Activated CD4-positive, alpha-beta memory T cell treated with anti-CD3 and anti-CD28 coated beads for 36 hours (primary cell): ENCODE measurements at regions of chr14 and their contacts with region 1.

Region 1: DNA sequence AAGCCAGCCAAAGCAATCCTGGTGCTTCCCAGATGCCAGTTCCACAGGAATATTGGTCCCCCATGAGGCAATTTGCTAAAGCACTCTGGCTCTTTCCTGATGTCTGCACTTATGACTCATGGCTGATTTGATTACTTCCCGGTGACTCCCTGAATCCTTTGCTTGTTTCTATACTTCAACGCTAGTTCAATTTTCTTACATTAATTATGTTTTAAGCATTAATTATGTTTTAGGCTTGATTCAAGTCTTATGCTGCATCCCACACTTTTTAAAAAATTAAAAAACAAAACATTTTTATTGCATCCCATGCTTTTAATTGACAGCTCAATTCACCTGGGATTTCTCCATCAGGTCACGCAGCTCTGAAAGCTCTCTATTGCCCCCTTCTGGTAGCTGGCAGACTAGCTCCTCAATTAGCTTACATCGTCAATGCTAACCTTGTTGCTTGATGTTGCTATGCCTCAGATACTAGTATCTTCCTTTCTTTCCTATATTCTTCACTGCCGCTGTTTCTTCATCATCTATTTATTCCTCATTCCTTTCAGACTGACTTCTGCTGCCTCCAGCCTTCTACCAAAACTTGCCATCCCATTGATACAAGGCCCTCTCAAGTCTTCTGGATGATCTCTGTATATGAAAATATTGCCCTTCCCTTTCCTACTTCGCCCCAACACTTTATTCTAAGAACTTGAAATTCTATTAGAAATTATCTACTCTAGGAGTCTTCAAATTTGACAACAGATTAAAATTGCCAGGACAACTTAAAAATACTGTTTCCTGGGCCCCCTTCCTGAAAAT is 32.0 kb downstream of the TSHR start:
- DNase-seq: peak; percentile 72
- H3K4me3 Mint-ChIP-seq: no peak overlapping the region
- H3K27ac Mint-ChIP-seq: no peak overlapping the region
- H3K4me1 Mint-ChIP-seq: no peaks in the 10 kb centered on the region
- H3K27me3 Mint-ChIP-seq: peaks cover 9% of the 10 kb centered on the region

Region 2: DNA sequence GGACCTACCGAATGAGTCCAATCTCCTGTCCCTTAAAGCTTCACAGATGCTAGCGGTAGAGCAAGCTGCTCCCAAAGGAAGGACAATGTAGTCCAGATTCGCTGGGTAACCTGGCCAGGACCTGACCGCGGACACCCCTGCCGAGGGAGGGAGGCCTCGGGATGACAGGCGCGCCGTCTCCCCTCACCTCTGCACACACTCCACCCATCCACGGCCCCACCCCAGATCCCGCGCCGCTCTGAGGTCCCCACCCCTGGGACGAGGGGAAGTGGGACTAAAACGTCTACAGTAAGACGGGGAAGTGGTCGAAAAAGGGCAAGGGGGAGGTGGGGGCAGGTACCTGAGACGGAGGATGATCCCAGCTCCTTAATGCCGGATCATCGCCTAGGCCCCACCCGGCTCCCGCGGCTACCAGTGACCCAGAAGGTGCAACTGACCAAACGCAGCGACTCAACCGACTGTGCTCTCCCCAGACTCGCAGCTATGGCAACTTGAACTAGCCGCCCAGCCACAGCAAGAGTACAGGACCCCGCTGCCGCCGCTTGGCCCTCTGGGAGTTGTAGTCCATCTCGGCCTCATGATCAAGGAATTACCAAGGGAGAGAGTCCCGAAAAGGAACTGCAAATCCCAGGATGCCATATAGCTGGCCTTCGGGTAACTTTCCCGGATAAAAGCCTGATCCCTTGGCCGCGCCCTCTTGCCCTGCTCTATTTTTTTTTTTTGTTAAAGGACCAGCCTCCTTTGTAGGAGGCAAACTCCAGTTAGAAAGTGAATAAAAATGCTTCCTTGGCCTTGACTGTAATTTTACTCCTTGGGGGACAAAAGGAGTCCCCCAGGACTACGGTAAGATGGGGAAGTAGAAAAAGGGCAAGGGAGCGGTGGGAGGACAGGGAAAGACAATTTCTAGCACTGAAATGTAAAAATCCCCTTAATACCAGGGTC is 45.9 kb before region 1 on chr14 and contains the start of gene CEP128:
- CTCF ChIA-PET with region 1: interaction called, 10 read pairs
- POLR2A ChIA-PET with region 1: no interaction called
- intact Hi-C with region 1: loop called (anchors 2 kb)
- DNase-seq: peak; percentile 92
- H3K4me3 Mint-ChIP-seq: peak within 1 kb of the TSS; percentile 88
- H3K27ac Mint-ChIP-seq: peak within 1 kb of the TSS; percentile 93
- H3K4me1 Mint-ChIP-seq: peaks cover 37% of the 10 kb centered on the region
- H3K27me3 Mint-ChIP-seq: no peaks in the 10 kb centered on the region
- total RNA-seq, gene CEP128: 19.4 to 22.8 TPM

Region 3: GRCh38 chr14:80973931-80974641 is 13.3 kb before region 1 on chr14:
- CTCF ChIA-PET with region 1: interaction called, 84 read pairs
- POLR2A ChIA-PET with region 1: interaction called, 3 read pairs
- intact Hi-C with region 1: no loop called
- DNase-seq: no peak
- H3K4me3 Mint-ChIP-seq: no peak overlapping the region
- H3K27ac Mint-ChIP-seq: no peak overlapping the region
- H3K4me1 Mint-ChIP-seq: peaks cover 20% of the 10 kb centered on the region
- H3K27me3 Mint-ChIP-seq: peaks cover 2% of the 10 kb centered on the region

Region 4: DNA sequence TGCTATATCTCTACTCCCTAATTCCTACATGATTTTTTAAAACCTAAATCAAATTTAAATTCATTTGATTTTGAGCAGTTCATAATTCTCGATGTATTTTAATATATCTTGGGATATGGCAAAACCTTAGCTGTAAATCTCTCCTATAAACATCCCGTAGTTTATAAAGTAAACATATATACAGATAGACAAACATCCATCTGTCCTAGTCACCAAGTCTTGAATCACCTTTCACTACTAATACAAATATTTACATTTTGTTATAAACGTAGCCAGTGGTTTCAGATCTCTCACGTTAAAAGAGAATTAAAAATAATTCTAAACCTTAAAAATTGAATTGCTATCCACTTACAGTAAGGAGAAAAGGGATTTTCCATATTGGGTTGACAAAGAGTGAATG is 74.9 kb after region 1 on chr14:
- CTCF ChIA-PET with region 1: no interaction called
- POLR2A ChIA-PET with region 1: no interaction called
- intact Hi-C with region 1: no loop called
- DNase-seq: no peak
- H3K4me3 Mint-ChIP-seq: no peak overlapping the region
- H3K27ac Mint-ChIP-seq: no peak overlapping the region
- H3K4me1 Mint-ChIP-seq: no peaks in the 10 kb centered on the region
- H3K27me3 Mint-ChIP-seq: peaks cover 3% of the 10 kb centered on the region